ENCODE measurements at regions of chr2 and their contacts with region 1.

Region 1: DNA sequence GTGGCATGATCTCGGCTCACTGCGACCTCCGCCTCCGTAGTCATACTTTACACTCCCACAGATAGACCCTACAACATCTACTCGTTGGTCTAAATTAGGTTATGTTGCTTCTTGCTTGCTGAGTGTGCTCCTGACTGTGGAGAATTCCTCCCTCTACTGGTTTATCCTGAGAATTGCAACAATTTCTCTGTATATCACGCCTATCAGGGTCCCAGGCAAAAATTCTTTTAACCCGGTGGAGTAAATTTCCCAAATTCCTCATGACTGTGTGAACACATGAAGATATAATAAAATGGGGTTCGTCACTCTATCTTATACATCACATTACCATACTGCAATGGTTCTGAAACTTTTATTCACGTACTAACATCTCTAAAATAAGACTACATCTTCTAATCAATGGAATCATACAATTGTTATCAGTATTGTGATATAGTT is 156.7 kb downstream of the EVA1A start:
- DNase-seq: peak; percentile 39
- ATAC-seq: peak; percentile 89
- H3K4me3 ChIP-seq: no peak overlapping the region
- H3K27ac ChIP-seq: no peak overlapping the region
- H3K4me1 ChIP-seq: no peaks in the 10 kb centered on the region
- H3K27me3 ChIP-seq: peaks cover 47% of the 10 kb centered on the region
- CTCF ChIP-seq: peak; percentile 57 to 70 (median 57); a peak in 5 of 6 replicates
- POLR2A ChIP-seq: no peak
- RAD21 ChIP-seq: peak; percentile 72

Region 2: GRCh38 chr2:74690571-74690970 is 713.4 kb before region 1 on chr2:
- CTCF ChIA-PET with region 1: no interaction called
- POLR2A ChIA-PET with region 1: no interaction called
- RAD21 ChIA-PET with region 1: no interaction called
- intact Hi-C with region 1: loop called (anchors 2 kb)
- DNase-seq: peak; percentile 49
- ATAC-seq: peak; percentile 87
- H3K4me3 ChIP-seq: no peak overlapping the region
- H3K27ac ChIP-seq: no peak overlapping the region
- H3K4me1 ChIP-seq: no peaks in the 10 kb centered on the region
- H3K27me3 ChIP-seq: no peaks in the 10 kb centered on the region
- CTCF ChIP-seq: peak; percentile 71 to 87 (median 76); a peak in 5 of 6 replicates
- POLR2A ChIP-seq: no peak
- RAD21 ChIP-seq: peak; percentile 94

Region 3: GRCh38 chr2:75064691-75065396 is 339.2 kb before region 1 on chr2:
- CTCF ChIA-PET with region 1: no interaction called
- POLR2A ChIA-PET with region 1: no interaction called
- RAD21 ChIA-PET with region 1: no interaction called
- intact Hi-C with region 1: loop called (anchors 2 kb)
- DNase-seq: peak; percentile 31
- ATAC-seq: peak; percentile 96
- H3K4me3 ChIP-seq: no peak overlapping the region
- H3K27ac ChIP-seq: no peak overlapping the region
- H3K4me1 ChIP-seq: no peaks in the 10 kb centered on the region
- H3K27me3 ChIP-seq: peaks cover 5% of the 10 kb centered on the region; the same call in 1 of the 2 replicates
- CTCF ChIP-seq: peak; percentile 64 to 99 (median 93); a peak in 5 of 6 replicates
- POLR2A ChIP-seq: no peak
- RAD21 ChIP-seq: peak; percentile 61

Region 4: GRCh38 chr2:75390169-75390568 is 13.8 kb before region 1 on chr2:
- CTCF ChIA-PET with region 1: no interaction called
- POLR2A ChIA-PET with region 1: no interaction called
- RAD21 ChIA-PET with region 1: no interaction called
- intact Hi-C with region 1: no loop called
- DNase-seq: no peak
- ATAC-seq: no peak
- H3K4me3 ChIP-seq: no peak overlapping the region
- H3K27ac ChIP-seq: no peak overlapping the region
- H3K4me1 ChIP-seq: no peaks in the 10 kb centered on the region
- H3K27me3 ChIP-seq: peaks cover 14% of the 10 kb centered on the region; the same call in 1 of the 2 replicates
- CTCF ChIP-seq: no peak
- POLR2A ChIP-seq: no peak
- RAD21 ChIP-seq: no peak